Activated CD4-positive, alpha-beta T cell treated with anti-CD3 and anti-CD28 coated beads for 36 hours (primary cell): ENCODE measurements at regions of chr2 and their contacts with region 1.

Region 1: GRCh38 chr2:101205521-101205998 is 47.1 kb upstream of the CNOT11 start:
- DNase-seq: peak; percentile 71
- ATAC-seq: peak; percentile 99
- H3K4me3 Mint-ChIP-seq: peak overlapping the region; percentile 43
- H3K27ac Mint-ChIP-seq: peak overlapping the region; percentile 38
- H3K4me1 Mint-ChIP-seq: peaks cover 4% of the 10 kb centered on the region
- H3K27me3 Mint-ChIP-seq: no peaks in the 10 kb centered on the region

Region 2: GRCh38 chr2:100021791-100022340 is 1183.7 kb before region 1 on chr2:
- CTCF ChIA-PET with region 1: no interaction called
- POLR2A ChIA-PET with region 1: no interaction called
- intact Hi-C with region 1: no loop called
- DNase-seq: no peak
- ATAC-seq: no peak
- H3K4me3 Mint-ChIP-seq: no peak overlapping the region
- H3K27ac Mint-ChIP-seq: no peak overlapping the region
- H3K4me1 Mint-ChIP-seq: no peaks in the 10 kb centered on the region
- H3K27me3 Mint-ChIP-seq: no peaks in the 10 kb centered on the region

Region 3: DNA sequence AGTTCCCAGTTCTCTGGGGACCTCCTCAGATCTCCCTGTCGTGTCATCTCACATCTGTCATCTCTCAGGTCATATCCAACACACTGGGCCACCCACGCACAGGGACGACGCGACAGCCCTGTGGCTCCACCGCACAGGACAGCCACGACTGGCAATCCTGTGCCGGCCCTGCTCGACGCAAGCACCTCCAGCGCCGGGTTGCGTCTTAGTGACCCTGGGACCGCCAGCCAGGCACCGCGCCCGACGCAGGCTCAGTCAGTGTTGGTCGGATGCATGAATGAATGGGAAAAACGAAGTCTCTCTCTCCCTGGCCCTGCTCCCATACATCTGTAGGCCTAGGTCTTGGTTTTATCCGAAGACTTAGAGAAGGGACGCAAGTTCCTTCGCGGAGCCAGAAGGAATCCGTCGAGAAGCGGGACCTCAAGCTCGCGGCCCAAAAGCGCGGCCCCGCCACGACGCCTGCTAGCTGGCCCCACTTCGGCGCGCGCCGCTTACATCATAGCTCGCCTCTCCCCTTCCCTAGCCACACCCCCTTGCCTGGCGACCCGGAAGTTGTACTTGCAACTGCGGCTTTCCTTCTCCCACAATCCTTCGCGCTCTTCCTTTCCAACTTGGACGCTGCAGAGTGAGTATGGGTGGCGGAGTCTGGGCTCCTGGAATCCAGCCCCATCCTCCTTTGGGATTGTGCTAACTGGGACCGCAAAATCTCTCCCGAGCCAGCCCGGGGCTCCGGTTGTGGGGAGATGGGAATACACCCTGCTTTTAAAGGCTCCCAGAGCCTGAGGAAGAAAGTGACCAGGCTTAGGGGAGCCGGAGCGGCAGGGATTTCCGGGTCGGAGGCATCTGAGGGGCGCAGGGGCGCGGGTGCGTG is 203.6 kb before region 1 on chr2 and contains the start of gene RPL31:
- CTCF ChIA-PET with region 1: interaction called, 21 read pairs
- POLR2A ChIA-PET with region 1: no interaction called
- intact Hi-C with region 1: no loop called
- DNase-seq: peak; percentile 98
- ATAC-seq: peak; percentile 95
- H3K4me3 Mint-ChIP-seq: peak within 1 kb of the TSS; percentile 99
- H3K27ac Mint-ChIP-seq: peak within 1 kb of the TSS; percentile 97
- H3K4me1 Mint-ChIP-seq: peaks cover 41% of the 10 kb centered on the region
- H3K27me3 Mint-ChIP-seq: no peaks in the 10 kb centered on the region
- total RNA-seq, gene RPL31: 889 to 1,817 TPM

Region 4: GRCh38 chr2:101036562-101037457 is 168.8 kb before region 1 on chr2:
- CTCF ChIA-PET with region 1: interaction called, 28 read pairs
- POLR2A ChIA-PET with region 1: no interaction called
- intact Hi-C with region 1: loop called (anchors 1 to 2 kb)
- DNase-seq: no peak
- ATAC-seq: no peak
- H3K4me3 Mint-ChIP-seq: no peak overlapping the region
- H3K27ac Mint-ChIP-seq: no peak overlapping the region
- H3K4me1 Mint-ChIP-seq: no peaks in the 10 kb centered on the region
- H3K27me3 Mint-ChIP-seq: no peaks in the 10 kb centered on the region

Region 5: GRCh38 chr2:101188683-101189405 is 16.7 kb before region 1 on chr2:
- CTCF ChIA-PET with region 1: interaction called, 11 read pairs
- POLR2A ChIA-PET with region 1: no interaction called
- intact Hi-C with region 1: no loop called
- DNase-seq: no peak
- ATAC-seq: no peak
- H3K4me3 Mint-ChIP-seq: no peak overlapping the region
- H3K27ac Mint-ChIP-seq: no peak overlapping the region
- H3K4me1 Mint-ChIP-seq: no peaks in the 10 kb centered on the region
- H3K27me3 Mint-ChIP-seq: no peaks in the 10 kb centered on the region

Region 6: DNA sequence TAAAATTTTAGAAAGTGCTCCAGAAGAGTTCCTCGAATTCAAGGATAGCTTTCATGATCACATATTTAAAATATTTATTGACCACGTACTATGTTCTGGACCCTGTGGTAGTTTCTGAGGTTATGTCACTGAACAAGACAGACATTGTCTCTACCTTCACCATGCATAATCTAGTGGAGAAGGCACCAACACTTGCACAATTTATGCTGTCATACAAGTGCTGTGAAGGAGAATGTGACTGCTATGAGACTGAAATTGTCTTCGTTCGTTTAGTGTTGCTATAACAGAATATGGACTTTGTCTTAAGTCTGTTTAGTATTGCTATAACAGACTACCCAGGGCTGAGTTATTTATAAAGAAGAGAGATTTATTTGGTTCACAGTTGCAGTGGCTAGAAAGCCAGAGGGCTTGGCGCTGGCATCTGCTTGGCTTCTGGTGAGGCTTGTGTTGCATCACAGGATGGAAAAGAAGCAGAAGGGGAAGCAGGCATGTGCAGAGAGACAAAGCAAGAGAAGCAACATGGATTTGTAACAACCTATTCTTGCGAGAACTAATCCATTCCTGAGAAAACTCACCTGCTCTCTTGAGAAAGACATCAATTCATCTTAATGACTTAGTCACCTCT is 319.4 kb after region 1 on chr2:
- CTCF ChIA-PET with region 1: no interaction called
- POLR2A ChIA-PET with region 1: no interaction called
- intact Hi-C with region 1: no loop called
- DNase-seq: no peak
- ATAC-seq: no peak
- H3K4me3 Mint-ChIP-seq: no peak overlapping the region
- H3K27ac Mint-ChIP-seq: no peak overlapping the region
- H3K4me1 Mint-ChIP-seq: peaks cover 5% of the 10 kb centered on the region
- H3K27me3 Mint-ChIP-seq: no peaks in the 10 kb centered on the region